WTC11 (cell line): ENCODE measurements at regions of chr9 and their contacts with region 1.

Region 1: GRCh38 chr9:128117613-128118471 is 9.7 kb downstream of the PTGES2 start:
- DNase-seq: peak; percentile 98
- ATAC-seq: peak; percentile 87
- H3K4me3 Mint-ChIP-seq: peak overlapping the region; percentile 50
- H3K27ac Mint-ChIP-seq: 0 out of 2 replicates have a peak overlapping the region, but pooled peaks have one; percentile 63
- H3K4me1 Mint-ChIP-seq: peaks cover 10% of the 10 kb centered on the region
- H3K27me3 Mint-ChIP-seq: no peaks in the 10 kb centered on the region
- CTCF ChIP-seq: peak; percentile 100

Region 2: DNA sequence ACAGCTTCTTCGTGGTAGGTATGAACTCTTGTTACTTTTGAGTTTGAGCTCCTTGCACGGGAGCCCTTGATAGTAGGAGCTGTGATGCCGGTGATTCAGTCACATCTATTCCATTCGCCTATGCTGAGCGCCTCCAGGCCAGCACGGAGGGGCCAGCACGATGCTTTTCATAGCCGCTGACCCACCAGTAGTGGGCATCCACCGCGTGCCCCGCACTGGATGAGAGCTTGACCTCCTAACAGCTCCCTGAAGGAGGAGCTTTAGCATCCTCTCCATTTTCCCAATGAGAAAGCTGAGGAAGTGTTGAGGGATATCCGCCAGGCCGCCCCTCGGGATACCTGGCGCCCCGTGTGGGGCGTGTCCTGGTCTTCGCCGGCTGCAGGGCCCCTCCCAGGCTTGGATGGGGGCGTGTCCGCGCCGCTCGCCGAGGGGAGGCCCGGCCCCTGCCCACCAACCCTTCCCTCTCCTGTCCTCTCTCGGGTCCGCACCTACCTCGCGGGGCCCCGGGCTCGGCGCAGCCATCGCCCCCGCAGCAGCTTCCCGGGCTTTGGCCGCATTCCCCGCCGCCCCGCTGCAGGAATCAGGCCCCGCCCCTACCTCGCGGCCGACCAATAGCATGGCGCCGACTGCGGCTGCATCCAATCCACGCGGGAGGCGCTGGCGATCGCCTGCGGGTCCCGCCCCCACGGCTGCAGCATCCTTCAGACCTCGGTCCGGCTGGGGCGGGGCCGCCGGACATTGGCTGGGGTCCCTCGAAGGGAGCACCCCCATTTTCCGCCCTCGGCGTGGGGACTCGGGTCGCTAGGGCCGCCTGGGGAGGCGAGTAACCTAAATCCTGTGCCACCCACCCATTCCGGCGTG is 187.4 kb before region 1 on chr9 and contains the start of gene PIP5KL1:
- CTCF ChIA-PET with region 1: interaction called, 14 read pairs
- POLR2A ChIA-PET with region 1: interaction called, 3 read pairs
- DNase-seq: peak; percentile 95
- ATAC-seq: peak; percentile 62
- H3K4me3 Mint-ChIP-seq: peak within 1 kb of the TSS; percentile 65
- H3K27ac Mint-ChIP-seq: peak within 1 kb of the TSS; percentile 93
- H3K4me1 Mint-ChIP-seq: peaks cover 27% of the 10 kb centered on the region
- H3K27me3 Mint-ChIP-seq: peaks cover 29% of the 10 kb centered on the region
- CTCF ChIP-seq: no peak
- total RNA-seq, gene PIP5KL1: 15.8 to 20.2 TPM (median 16.8 TPM) in 3 replicates

Region 3: DNA sequence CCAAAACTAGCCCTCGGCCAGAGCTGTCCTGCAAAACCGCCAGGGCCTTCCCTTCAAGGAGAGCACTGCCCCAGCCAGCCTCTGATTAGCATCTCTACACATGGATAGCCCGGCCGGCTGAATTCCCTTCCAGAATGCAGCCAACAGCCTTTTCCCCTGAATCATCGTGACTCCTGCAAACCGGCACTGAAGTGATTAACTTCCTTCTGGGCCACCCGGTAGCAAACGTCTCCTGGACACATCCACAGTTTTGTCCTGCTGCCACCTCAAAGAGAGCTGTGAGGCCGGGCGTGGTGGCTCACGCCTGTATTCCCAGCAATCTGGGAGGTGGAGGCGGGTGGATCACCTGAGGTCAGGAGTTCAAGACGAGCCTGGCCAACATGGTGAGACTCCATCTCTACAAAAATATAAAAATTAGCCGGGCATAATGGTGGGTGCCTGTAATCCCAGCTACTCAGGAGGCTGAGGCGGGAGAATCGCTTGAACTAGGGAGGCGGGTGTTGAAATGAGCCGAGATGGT is 116.0 kb before region 1 on chr9:
- CTCF ChIA-PET with region 1: interaction called, 15 read pairs
- POLR2A ChIA-PET with region 1: no interaction called
- DNase-seq: peak; percentile 46
- ATAC-seq: peak; percentile 92
- H3K4me3 Mint-ChIP-seq: no peak overlapping the region
- H3K27ac Mint-ChIP-seq: peak overlapping the region; percentile 85; the same call in 1 of the 2 replicates
- H3K4me1 Mint-ChIP-seq: peaks cover 11% of the 10 kb centered on the region
- H3K27me3 Mint-ChIP-seq: no peaks in the 10 kb centered on the region
- CTCF ChIP-seq: no peak

Region 4: DNA sequence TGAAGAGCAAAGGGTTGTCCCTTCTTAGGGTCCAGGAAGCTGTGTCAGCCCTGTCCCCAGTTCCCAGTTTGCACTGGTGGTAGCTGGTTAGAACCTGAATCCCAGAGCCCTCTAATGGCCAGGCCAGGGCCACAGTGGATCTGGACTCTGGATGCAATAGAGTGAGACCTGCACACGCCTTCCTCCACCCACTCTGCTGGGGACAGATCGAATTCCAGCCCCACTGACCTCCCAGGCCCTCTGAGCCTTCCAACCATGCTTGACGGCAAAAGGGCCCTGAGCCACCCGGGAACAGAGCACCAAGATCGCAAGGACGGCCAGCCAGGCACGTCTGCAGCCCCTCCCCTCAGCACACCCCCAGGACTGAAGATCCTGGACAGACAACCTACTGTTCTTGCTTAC is 74.4 kb before region 1 on chr9:
- CTCF ChIA-PET with region 1: interaction called, 13 read pairs
- POLR2A ChIA-PET with region 1: no interaction called
- DNase-seq: no peak
- ATAC-seq: peak; percentile 34
- H3K4me3 Mint-ChIP-seq: no peak overlapping the region
- H3K27ac Mint-ChIP-seq: no peak overlapping the region
- H3K4me1 Mint-ChIP-seq: peaks cover 6% of the 10 kb centered on the region
- H3K27me3 Mint-ChIP-seq: peaks cover 2% of the 10 kb centered on the region; the same call in 1 of the 2 replicates
- CTCF ChIP-seq: no peak

Region 5: DNA sequence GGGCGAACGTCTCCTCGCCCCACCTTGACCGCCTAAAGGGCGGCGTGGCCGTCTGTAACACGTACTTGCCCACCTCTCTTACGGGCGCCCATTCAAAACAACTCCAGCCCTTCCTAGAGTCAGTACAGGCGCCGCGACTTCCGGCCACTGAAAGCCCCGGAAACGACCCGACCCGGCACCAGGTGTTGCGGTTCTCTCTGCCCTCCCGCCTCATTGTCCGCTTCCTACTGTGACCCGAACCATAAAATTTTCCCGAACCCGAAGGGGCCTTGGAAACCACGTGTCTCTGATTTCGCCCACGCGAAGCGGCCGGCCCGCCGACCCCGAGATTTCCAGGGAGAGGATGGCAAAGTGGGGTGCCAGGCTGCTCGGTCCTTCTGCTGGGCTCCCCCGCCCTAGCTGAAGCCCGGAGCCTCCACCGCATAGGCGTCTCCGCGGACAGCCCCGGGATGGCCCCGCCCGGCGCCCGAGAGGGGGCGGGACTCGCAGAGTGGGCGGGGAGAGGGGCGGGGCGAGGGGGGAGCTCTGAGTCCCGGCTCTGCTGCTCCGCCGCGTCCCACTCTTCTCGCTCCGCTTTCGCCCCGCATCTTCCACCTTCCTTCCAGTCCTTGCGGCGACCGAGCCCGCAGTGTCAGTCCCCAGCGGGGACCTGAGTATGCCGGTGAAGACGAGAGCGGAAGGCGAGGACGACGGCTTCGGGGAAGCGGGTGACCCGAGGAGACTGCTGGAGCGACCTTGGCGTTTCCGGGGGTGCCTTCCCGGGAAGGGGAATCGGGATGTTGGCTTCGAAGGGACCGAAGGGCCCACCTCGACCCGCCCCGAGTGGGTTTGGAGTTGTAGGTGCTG is 10.4 kb after region 1 on chr9:
- CTCF ChIA-PET with region 1: interaction called, 53 read pairs
- POLR2A ChIA-PET with region 1: no interaction called
- DNase-seq: peak; percentile 80
- ATAC-seq: peak; percentile 80
- H3K4me3 Mint-ChIP-seq: peak overlapping the region; percentile 94
- H3K27ac Mint-ChIP-seq: peak overlapping the region; percentile 97
- H3K4me1 Mint-ChIP-seq: peaks cover 17% of the 10 kb centered on the region
- H3K27me3 Mint-ChIP-seq: peaks cover 19% of the 10 kb centered on the region
- CTCF ChIP-seq: no peak

Region 6: GRCh38 chr9:128159784-128160602 is 42.2 kb after region 1 on chr9 and contains the start of gene BBLN:
- CTCF ChIA-PET with region 1: interaction called, 30 read pairs
- POLR2A ChIA-PET with region 1: no interaction called
- DNase-seq: peak; percentile 98
- ATAC-seq: peak; percentile 95
- H3K4me3 Mint-ChIP-seq: peak within 1 kb of the TSS; percentile 74
- H3K27ac Mint-ChIP-seq: peak within 1 kb of the TSS; percentile 76
- H3K4me1 Mint-ChIP-seq: peaks cover 5% of the 10 kb centered on the region
- H3K27me3 Mint-ChIP-seq: no peaks in the 10 kb centered on the region
- CTCF ChIP-seq: no peak
- total RNA-seq, gene BBLN: 77.1 to 86.9 TPM (median 86.6 TPM) in 3 replicates